H1 (cell line): ENCODE measurements at regions of chr11 and their contacts with region 1.

Region 1: DNA sequence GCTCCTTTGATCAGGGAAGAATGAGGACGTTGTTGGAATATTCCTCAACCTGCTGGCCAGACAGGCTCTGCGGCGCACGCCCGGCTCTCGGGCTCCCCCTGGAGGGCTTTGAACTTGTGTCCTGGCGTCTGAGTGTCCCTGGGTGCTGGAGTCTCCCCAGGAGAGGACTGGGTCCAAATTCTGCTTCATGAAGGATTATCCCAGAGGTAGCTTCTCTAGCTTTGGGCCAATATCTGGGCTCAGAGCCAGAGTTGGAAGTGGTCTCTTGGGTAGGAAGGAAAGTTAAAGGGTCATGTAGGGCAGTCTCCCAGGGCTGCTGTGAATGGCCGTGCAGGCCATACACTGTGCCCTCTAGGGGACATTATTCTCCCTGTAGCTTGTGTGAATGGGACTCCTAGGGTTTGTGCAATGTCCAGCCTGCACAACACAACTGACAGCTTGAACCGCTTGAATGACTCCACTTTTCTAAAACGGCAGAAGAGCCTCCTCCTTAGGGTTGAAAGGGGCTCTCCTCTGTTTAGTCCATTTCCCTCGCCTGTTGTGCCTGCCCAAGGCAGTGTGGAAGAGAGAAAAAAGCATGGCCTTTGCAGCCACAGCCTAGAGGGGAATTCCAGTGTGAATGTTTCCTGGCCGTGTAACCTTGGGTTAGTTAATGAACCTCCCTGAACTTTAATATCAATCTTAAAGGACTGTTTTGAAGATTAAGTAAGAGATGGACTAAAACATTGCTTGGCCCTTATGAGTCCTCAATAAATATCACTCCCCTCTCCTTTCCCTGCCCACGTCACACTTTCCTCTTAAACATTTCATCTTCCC is 111.2 kb upstream of the THY1 start:
- DNase-seq: peak; percentile 36 to 96
- H3K4me3 ChIP-seq: no peak overlapping the region
- H3K27ac ChIP-seq: no peak overlapping the region
- H3K4me1 ChIP-seq: peaks cover 0 to 6% (median under 1%) of the 10 kb centered on the region in 4 experiments; a peak in 2 of 7 replicates
- H3K27me3 ChIP-seq: peaks cover 0 to 3% (median 0%) of the 10 kb centered on the region in 4 experiments; a peak in 1 of 7 replicates
- CTCF ChIP-seq: peak; percentile 80 to 96 (median 85)
- EP300 ChIP-seq: no peak
- POLR2A ChIP-seq: no peak
- RAD21 ChIP-seq: peak; percentile 76 to 84

Region 2: GRCh38 chr11:119421941-119422808 is 112.0 kb before region 1 on chr11:
- CTCF ChIA-PET with region 1: no interaction called
- POLR2A ChIA-PET with region 1: no interaction called
- DNase-seq: no peak
- H3K4me3 ChIP-seq: peak overlapping the region; percentile 76 to 91 (median 90)
- H3K27ac ChIP-seq: peak overlapping the region; percentile 43
- H3K4me1 ChIP-seq: peaks cover 20 to 40% (median 27%) of the 10 kb centered on the region in 4 experiments
- H3K27me3 ChIP-seq: no peaks in the 10 kb centered on the region; a peak in 1 of 7 replicates
- CTCF ChIP-seq: no peak
- EP300 ChIP-seq: no peak
- POLR2A ChIP-seq: peak in 1 of 2 experiments; percentile 37; a peak in 1 of 3 replicates
- RAD21 ChIP-seq: no peak

Region 3: DNA sequence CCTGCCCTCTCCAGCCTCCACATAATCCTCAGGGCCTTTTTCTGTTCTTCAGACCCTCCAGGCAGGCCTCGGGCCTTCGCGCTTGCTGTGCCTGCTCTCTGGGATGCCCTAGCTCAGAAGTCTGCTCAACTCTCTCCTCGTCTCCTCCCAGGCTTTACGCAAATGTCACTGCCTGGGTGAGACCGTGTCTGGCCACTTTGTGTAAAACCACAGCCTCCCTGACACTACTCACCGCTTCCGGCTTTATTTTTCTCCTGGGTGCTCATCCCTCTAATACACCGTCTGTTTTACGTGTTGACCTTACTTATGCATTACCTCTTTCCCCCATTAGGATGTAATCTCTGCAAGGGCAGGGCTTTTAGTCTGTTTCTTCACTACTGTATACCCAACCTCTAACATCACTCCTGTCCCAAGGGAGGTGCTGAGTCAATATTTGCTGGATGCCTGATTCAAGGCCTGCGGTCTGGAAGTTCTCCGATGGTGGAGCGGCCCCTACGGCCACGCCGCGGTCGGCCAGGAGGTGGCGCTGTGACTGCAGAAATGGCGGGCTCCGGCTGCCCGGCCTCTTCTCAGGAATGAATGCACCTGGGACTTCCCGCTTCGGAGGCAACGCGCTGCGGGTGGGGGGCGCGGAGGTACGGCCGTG is 53.0 kb before region 1 on chr11:
- CTCF ChIA-PET with region 1: interaction called, 160 read pairs
- POLR2A ChIA-PET with region 1: no interaction called
- DNase-seq: peak in 1 of 2 experiments; percentile 100
- H3K4me3 ChIP-seq: peak overlapping the region in 2 of 4 experiments; percentile 19 to 50; a peak in 3 of 8 replicates
- H3K27ac ChIP-seq: no peak overlapping the region
- H3K4me1 ChIP-seq: 0 out of 7 replicates have a peak, but pooled peaks cover 0 to 2% (median 0%) of the 10 kb centered on the region in 4 experiments
- H3K27me3 ChIP-seq: no peaks in the 10 kb centered on the region; a peak in 2 of 7 replicates
- CTCF ChIP-seq: peak; percentile 95 to 98 (median 98)
- EP300 ChIP-seq: no peak
- POLR2A ChIP-seq: no peak
- RAD21 ChIP-seq: peak; percentile 97 to 98

Region 4: DNA sequence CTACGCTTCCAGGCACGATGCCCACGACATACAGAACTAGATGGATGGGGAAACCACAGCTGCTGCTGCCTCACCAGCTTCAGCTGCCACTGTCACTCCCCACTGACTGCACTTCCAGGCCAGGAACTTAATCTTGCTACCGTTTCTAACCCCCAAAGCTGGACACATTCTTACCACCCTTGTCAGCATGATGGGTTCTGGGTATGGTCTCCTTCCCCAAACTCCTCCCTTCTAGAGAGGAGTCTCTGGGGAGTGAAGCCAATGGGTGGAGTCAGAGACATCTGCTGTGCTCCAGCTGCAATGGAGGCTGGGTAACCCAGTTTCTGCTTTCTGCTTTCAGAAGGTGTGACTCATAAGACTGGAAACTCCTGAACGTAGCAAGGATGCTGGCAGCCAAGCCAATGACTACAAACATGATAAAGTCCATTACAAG is 24.1 kb before region 1 on chr11:
- CTCF ChIA-PET with region 1: interaction called, 49 read pairs
- POLR2A ChIA-PET with region 1: no interaction called
- DNase-seq: no peak
- H3K4me3 ChIP-seq: no peak overlapping the region
- H3K27ac ChIP-seq: no peak overlapping the region
- H3K4me1 ChIP-seq: peaks cover 0 to 6% (median 1%) of the 10 kb centered on the region in 4 experiments; a peak in 3 of 7 replicates
- H3K27me3 ChIP-seq: no peaks in the 10 kb centered on the region
- CTCF ChIP-seq: no peak
- EP300 ChIP-seq: no peak
- POLR2A ChIP-seq: no peak
- RAD21 ChIP-seq: no peak

Region 5: GRCh38 chr11:119545978-119546885 is 12.1 kb after region 1 on chr11:
- CTCF ChIA-PET with region 1: interaction called, 23 read pairs
- POLR2A ChIA-PET with region 1: no interaction called
- DNase-seq: peak in 1 of 2 experiments; percentile 39
- H3K4me3 ChIP-seq: no peak overlapping the region
- H3K27ac ChIP-seq: no peak overlapping the region
- H3K4me1 ChIP-seq: no peaks in the 10 kb centered on the region
- H3K27me3 ChIP-seq: no peaks in the 10 kb centered on the region; a peak in 1 of 7 replicates
- CTCF ChIP-seq: no peak
- EP300 ChIP-seq: no peak
- POLR2A ChIP-seq: no peak
- RAD21 ChIP-seq: no peak

Region 6: DNA sequence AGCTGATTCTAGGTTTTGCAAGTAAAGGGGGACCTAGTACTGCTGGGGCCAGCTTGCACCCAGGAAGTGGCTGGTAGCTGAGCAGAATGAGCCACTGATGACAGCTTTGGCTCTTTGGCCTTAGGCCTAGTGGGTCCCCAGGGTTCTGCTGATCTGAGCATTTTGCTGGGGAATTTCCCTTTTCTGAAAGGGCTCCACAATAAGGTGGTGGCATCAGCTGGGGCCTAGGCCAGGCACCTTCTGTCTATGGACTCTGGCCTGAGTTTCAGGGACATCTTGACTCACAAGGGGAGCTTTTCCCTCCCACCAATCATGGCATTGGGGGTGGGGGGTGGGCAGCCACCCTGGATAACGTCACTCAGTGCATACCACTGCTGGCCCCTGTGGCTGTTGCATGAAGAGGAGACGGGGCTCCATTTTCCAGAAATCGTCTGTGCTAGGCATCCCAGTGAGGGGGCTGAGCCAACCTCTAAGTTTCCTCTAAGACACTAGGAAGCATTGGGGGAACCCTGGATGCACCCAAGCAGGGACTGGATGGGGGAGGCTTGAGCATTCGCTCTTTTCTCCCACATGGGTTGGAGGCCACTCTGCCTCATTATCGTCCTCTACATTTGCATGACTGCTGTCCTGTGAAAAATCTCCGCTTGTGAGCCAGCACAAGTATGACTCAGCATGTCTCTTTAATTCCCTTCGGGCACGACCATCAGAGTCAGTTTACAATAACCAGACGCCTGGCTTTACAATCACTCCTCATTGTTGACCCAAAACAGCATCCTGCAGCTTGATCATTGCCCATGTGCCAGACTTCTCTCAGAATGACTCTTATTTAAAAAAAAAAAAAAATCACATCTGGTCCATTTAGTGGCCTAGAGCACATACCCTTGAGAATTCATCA is 33.8 kb after region 1 on chr11:
- CTCF ChIA-PET with region 1: interaction called, 23 read pairs
- POLR2A ChIA-PET with region 1: no interaction called
- DNase-seq: no peak
- H3K4me3 ChIP-seq: no peak overlapping the region
- H3K27ac ChIP-seq: no peak overlapping the region
- H3K4me1 ChIP-seq: peaks cover 0 to 8% (median 0%) of the 10 kb centered on the region in 4 experiments; a peak in 4 of 7 replicates
- H3K27me3 ChIP-seq: no peaks in the 10 kb centered on the region; a peak in 1 of 7 replicates
- CTCF ChIP-seq: no peak
- EP300 ChIP-seq: no peak
- POLR2A ChIP-seq: no peak
- RAD21 ChIP-seq: no peak

Region 7: DNA sequence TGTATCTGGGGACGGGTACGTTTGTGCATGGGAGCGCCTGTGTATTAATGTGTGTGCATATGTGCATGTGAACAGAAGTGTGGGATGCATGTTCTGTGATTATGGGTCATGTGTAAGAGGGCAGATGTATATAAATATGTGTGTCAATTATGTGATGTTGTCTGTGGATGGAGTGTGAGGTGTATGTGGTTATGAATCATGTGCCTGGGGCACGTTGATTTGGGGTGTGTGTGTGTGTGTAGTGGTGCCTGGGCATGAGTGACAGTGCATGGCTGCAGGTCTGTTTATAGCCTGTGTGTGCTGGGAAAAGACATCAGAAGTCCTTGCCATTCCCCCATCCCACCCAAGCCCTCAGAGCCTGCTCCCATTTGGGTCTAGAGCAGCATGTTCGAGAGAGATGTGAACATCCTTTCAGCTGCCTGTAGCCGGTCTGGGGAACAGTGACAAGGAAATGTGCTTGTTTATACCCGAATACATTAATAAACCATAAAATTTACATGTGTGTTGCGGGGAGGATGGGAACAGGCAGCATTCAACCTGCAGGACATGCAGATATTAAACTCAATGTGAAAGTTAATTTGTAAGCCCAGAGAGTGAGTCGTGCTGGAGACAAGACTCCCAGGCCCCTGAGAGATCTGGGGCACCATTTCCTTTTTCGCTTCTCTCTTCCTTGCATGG is 65.9 kb after region 1 on chr11:
- CTCF ChIA-PET with region 1: interaction called, 14 read pairs
- POLR2A ChIA-PET with region 1: no interaction called
- DNase-seq: no peak
- H3K4me3 ChIP-seq: no peak overlapping the region
- H3K27ac ChIP-seq: no peak overlapping the region
- H3K4me1 ChIP-seq: peaks cover 0 to 7% (median 3%) of the 10 kb centered on the region in 4 experiments; a peak in 2 of 7 replicates
- H3K27me3 ChIP-seq: peaks cover 0 to 5% (median 0%) of the 10 kb centered on the region in 4 experiments; a peak in 2 of 7 replicates
- CTCF ChIP-seq: no peak
- EP300 ChIP-seq: no peak
- POLR2A ChIP-seq: no peak
- RAD21 ChIP-seq: no peak

Region 8: DNA sequence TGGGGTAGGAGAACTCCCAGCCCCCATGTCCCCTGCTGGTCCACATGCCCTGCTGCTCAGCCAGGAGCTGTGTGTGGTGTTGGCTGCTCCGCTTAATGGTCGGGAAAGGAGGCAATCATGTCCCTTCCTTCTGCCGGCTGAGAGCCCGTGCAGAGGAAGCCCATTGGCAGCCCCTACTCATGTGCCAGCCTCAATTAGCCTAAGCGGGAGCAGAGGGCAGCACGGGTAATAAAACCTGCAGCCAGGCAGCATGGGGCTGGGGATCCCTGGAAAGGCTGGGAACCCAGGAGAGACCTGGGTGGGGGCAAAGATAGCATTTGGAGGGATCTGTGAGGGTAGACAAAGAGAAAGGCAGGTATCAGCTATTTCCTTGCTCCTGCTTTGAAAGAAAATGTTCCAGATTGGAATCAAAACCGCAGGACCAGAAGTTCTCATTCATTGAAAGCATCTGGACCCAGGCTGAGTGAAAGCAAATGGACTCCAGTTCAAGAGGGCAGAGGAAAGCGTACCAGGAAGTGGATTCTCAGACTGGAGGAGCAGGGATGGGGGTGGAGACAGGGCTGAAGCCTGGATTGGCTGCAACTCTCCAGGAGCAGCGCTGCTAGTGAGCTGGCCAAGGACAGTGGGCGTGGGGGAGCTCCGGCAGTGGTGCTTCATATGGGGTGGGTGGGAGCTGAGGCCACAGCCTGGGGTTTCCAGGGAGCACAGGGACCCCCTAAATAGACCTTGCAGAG is 298.2 kb after region 1 on chr11:
- CTCF ChIA-PET with region 1: no interaction called
- POLR2A ChIA-PET with region 1: no interaction called
- DNase-seq: no peak
- H3K4me3 ChIP-seq: no peak overlapping the region
- H3K27ac ChIP-seq: no peak overlapping the region
- H3K4me1 ChIP-seq: peaks cover 0 to 10% (median 4%) of the 10 kb centered on the region in 4 experiments; a peak in 5 of 7 replicates
- H3K27me3 ChIP-seq: no peaks in the 10 kb centered on the region; a peak in 2 of 7 replicates
- CTCF ChIP-seq: no peak
- EP300 ChIP-seq: no peak
- POLR2A ChIP-seq: no peak
- RAD21 ChIP-seq: no peak

Region 9: GRCh38 chr11:119964136-119965025 is 430.3 kb after region 1 on chr11:
- CTCF ChIA-PET with region 1: no interaction called
- POLR2A ChIA-PET with region 1: no interaction called
- DNase-seq: peak in 1 of 2 experiments; percentile 50
- H3K4me3 ChIP-seq: no peak overlapping the region; a peak in 2 of 8 replicates
- H3K27ac ChIP-seq: peak overlapping the region; percentile 68
- H3K4me1 ChIP-seq: peaks cover 4 to 13% (median 9%) of the 10 kb centered on the region in 4 experiments; a peak in 6 of 7 replicates
- H3K27me3 ChIP-seq: no peaks in the 10 kb centered on the region
- CTCF ChIP-seq: no peak
- EP300 ChIP-seq: 0 out of 3 replicates have a peak, but pooled peaks of 1 of the 2 experiments have one; percentile 15
- POLR2A ChIP-seq: no peak
- RAD21 ChIP-seq: no peak; a peak in 1 of 4 replicates